PC-3 (cell line): ENCODE measurements at regions of chr21 and their contacts with region 1.

Region 1: GRCh38 chr21:37514038-37514665 is 147.6 kb downstream of the DYRK1A start:
- DNase-seq: no peak
- ATAC-seq: no peak
- H3K4me3 ChIP-seq: no peak overlapping the region
- H3K27ac ChIP-seq: no peak overlapping the region
- H3K4me1 ChIP-seq: no peaks in the 10 kb centered on the region
- H3K27me3 ChIP-seq: no peaks in the 10 kb centered on the region
- CTCF ChIP-seq: no peak

Region 2: DNA sequence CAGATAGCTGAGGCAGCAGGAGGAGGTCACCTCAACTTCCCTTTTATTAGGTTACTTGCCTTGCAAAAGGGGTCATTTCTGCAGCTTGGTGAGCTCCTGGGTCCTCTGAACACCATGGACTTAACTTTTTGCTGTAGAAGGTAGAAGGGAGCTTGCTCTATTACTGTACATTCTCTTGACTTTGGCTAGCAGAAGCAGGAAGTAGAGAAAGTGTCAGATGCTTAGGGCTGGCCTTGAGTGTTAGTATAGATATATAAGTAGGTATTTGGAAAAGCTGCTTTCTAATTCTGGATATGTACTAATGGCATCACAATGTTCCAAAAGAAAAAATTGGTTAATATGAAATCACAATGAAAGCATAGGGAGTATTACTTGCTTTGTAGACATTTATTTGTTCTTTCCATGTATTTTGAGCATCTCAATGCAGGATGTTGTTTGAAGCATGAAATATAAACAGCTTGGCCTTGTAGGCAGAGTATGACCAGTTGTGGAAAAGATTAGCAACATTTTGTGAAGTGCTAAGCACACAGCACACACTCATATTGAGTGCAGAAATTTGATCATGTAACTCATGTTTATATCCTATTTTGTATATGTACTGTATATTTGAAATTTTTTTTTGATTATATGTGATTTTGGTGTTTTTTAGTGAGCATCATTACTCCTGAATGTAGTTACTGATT is 38.8 kb before region 1 on chr21:
- CTCF ChIA-PET with region 1: no interaction called
- POLR2A ChIA-PET with region 1: no interaction called
- intact Hi-C with region 1: no loop called
- DNase-seq: no peak
- ATAC-seq: peak; percentile 50; the same call in 1 of the 2 replicates
- H3K4me3 ChIP-seq: no peak overlapping the region
- H3K27ac ChIP-seq: no peak overlapping the region
- H3K4me1 ChIP-seq: no peaks in the 10 kb centered on the region
- H3K27me3 ChIP-seq: no peaks in the 10 kb centered on the region
- CTCF ChIP-seq: no peak

Region 3: GRCh38 chr21:37575580-37575979 is 61.4 kb after region 1 on chr21:
- CTCF ChIA-PET with region 1: no interaction called
- POLR2A ChIA-PET with region 1: no interaction called
- intact Hi-C with region 1: no loop called
- DNase-seq: no peak
- ATAC-seq: no peak
- H3K4me3 ChIP-seq: no peak overlapping the region
- H3K27ac ChIP-seq: no peak overlapping the region
- H3K4me1 ChIP-seq: no peaks in the 10 kb centered on the region
- H3K27me3 ChIP-seq: no peaks in the 10 kb centered on the region
- CTCF ChIP-seq: no peak

Region 4: GRCh38 chr21:38159355-38159754 is 645.2 kb after region 1 on chr21:
- CTCF ChIA-PET with region 1: no interaction called
- POLR2A ChIA-PET with region 1: interaction called, 22 read pairs
- intact Hi-C with region 1: no loop called
- DNase-seq: peak; percentile 77
- ATAC-seq: peak; percentile 67
- H3K4me3 ChIP-seq: no peak overlapping the region
- H3K27ac ChIP-seq: no peak overlapping the region
- H3K4me1 ChIP-seq: no peaks in the 10 kb centered on the region
- H3K27me3 ChIP-seq: peaks cover 21% of the 10 kb centered on the region; the same call in 1 of the 2 replicates
- CTCF ChIP-seq: peak; percentile 91

Region 5: DNA sequence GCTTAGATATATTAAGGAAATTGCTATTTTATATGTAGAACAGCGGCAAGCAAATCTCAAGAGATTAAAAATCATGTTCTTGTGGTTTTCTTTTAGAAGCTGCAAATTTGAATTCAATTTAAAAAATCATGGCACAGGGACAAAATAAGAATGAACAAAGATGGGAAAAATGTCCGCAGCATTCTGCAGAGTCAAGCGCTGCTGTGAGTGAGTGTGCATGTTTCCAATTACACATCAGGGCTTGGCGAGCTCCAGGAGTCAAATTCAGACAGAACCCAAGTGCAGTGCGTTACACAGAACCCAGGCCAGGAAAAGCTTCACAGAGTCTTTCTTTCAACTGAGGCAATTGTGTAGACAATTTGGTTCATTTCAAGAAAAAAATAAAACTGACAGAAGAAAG is 1017.4 kb after region 1 on chr21:
- CTCF ChIA-PET with region 1: no interaction called
- POLR2A ChIA-PET with region 1: no interaction called
- intact Hi-C with region 1: no loop called
- DNase-seq: no peak
- ATAC-seq: no peak
- H3K4me3 ChIP-seq: no peak overlapping the region
- H3K27ac ChIP-seq: no peak overlapping the region
- H3K4me1 ChIP-seq: no peaks in the 10 kb centered on the region
- H3K27me3 ChIP-seq: peaks cover 58% of the 10 kb centered on the region
- CTCF ChIP-seq: no peak